Dorsolateral prefrontal cortex (tissue), 120 donors: ENCODE measurements at regions of chr1 and their contacts with region 1.

Region 1: GRCh38 chr1:84944767-84945486 is 51.9 kb upstream of the LPAR3 start:
- DNase-seq: peak in 8 of 10 donors; percentile 30 to 66 (median 51)
- H3K4me3 ChIP-seq: peak overlapping the region; percentile 7 to 65 (median 48)
- H3K27ac ChIP-seq: peak overlapping the region in 25 of 59 donors; percentile 5 to 59 (median 34)
- H3K27me3 ChIP-seq: no peaks in the 10 kb centered on the region
- CTCF ChIP-seq: peak; percentile 77 to 99 (median 94)

Region 2: GRCh38 chr1:84653130-84653677 is 291.7 kb before region 1 on chr1:
- intact Hi-C with region 1: no loop called
- DNase-seq: no peak
- H3K4me3 ChIP-seq: no peak overlapping the region
- H3K27ac ChIP-seq: peak overlapping the region in 1 of 59 donors; percentile 6
- H3K27me3 ChIP-seq: no peaks in the 10 kb centered on the region
- CTCF ChIP-seq: peak in 12 of 56 donors; percentile 7 to 30 (median 12)

Region 3: GRCh38 chr1:85027242-85027983 is 82.5 kb after region 1 on chr1:
- intact Hi-C with region 1: loop called (anchors 2 to 10 kb)
- DNase-seq: no peak
- H3K4me3 ChIP-seq: no peak overlapping the region
- H3K27ac ChIP-seq: no peak overlapping the region
- H3K27me3 ChIP-seq: peaks cover 0 to 4% (median 0%) of the 10 kb centered on the region in 45 donors
- CTCF ChIP-seq: peak in 19 of 56 donors; percentile 10 to 53 (median 29)